Activated CD4-positive, alpha-beta T cell treated with anti-CD3 and anti-CD28 coated beads for 36 hours (primary cell): ENCODE measurements at regions of chr12 and their contacts with region 1.

Region 1: DNA sequence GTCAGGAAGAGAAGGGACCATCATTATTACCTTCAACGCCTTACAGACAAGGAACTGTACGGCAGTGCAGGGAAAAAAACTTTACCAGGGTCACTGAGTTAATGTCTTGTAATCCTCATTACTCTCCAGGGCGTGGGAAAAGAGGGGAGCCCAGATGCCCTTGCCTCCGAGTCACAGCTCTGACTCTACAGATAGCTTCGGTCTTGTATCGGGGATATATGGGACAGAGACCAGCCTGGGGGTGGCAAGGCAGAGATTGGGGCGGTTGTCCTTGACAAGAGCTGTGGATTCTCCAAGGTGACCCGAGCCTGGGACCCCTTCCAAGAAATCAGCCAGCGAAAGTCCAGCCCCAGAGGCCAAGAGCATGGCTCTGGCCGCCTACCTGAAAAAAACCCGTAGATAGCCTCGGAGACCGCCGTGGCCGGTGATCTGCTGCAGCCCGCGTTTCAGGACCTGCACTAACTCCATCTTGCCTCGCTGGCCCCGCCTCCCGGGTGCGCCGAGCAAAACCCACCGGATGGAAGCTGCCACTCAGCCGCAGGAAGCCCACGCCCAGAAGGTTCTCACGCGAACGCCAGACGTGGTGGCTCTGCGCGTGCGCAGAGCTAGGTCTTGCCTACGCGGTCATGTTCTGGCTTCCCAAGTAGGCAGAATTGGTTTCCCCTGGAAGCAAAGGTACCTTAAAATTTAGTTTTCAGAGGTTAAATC is at the start of gene NDUFA12:
- DNase-seq: peak; percentile 98
- ATAC-seq: peak; percentile 99
- H3K4me3 Mint-ChIP-seq: peak within 1 kb of the TSS; percentile 95
- H3K27ac Mint-ChIP-seq: peak within 1 kb of the TSS; percentile 90
- H3K4me1 Mint-ChIP-seq: peaks cover 49% of the 10 kb centered on the region
- H3K27me3 Mint-ChIP-seq: no peaks in the 10 kb centered on the region
- total RNA-seq, gene NDUFA12: 135 to 194 TPM

Region 2: DNA sequence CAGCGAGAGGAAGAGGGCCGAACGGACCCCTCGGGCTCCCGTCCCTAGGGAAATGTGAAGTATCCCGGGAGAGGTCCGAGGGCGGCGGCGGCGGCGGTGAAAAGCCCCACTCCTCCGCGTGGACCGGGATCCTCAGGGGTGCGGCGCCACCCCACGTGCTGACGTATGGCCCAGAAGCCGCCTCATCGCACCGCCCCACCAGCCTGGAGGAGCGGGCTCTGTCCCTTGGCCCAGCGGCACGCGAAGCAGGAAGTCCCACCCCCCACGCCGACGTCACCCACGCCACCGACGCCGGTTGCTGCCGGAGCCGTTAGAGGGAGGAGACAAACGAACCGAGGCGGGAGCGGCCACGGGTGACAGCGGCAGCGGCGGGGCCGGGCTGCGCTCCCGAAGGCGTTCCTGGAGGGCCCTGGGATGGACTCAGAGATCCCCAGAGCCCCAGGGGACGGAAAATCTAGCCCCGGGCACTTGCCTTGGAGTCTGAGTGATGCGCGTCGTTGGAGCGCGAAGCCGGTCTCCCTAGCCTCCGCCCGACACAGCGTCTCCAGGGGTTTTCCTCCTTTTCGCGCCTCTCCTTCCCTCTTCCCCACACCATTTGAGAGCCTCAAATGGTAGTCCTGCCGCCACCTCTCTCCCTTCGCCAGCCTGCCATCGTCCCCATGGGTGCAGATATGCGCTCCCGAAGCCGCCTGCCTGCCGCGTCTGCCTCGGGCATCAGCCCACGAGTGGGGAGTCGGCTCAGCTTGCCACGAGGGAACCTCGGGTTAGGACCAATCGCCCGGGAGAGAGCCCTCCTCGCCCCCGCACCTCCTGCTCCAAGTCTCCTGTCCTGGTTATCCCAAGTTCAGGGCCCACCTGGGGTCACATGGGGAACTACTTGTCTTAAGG is 543.4 kb before region 1 on chr12 and contains the start of gene CEP83:
- CTCF ChIA-PET with region 1: no interaction called
- POLR2A ChIA-PET with region 1: no interaction called
- intact Hi-C with region 1: loop called in 1 of 2 experiments (anchors 1 kb)
- DNase-seq: peak; percentile 98
- ATAC-seq: peak; percentile 99
- H3K4me3 Mint-ChIP-seq: peak within 1 kb of the TSS; percentile 96
- H3K27ac Mint-ChIP-seq: peak within 1 kb of the TSS; percentile 95
- H3K4me1 Mint-ChIP-seq: peaks cover 30% of the 10 kb centered on the region
- H3K27me3 Mint-ChIP-seq: peaks cover 10% of the 10 kb centered on the region
- total RNA-seq, gene CEP83: 21.9 to 22.6 TPM

Region 3: DNA sequence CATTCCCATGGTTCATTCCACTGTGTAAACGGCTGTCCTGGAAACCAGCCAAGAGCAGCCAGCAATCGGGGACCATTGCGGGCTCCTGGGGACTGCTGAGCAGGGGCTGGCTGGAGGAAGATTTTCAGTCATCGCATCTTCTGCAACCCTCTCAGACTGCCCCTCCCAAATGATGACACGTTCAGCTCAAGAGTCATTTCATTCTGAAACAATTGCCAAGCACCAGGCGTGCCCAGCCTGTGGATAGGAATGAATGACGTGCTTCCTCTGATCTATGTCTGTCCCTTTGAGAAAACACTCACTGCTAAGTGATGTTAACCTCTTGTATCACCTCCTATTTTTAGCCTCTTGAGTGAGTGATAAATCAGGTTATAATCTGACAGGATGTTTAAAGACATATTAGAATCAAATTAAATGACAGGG is 61.9 kb before region 1 on chr12:
- CTCF ChIA-PET with region 1: no interaction called
- POLR2A ChIA-PET with region 1: no interaction called
- intact Hi-C with region 1: loop called in 1 of 2 experiments (anchors 5 kb)
- DNase-seq: peak; percentile 79
- ATAC-seq: peak; percentile 96
- H3K4me3 Mint-ChIP-seq: peak overlapping the region; percentile 15
- H3K27ac Mint-ChIP-seq: peak overlapping the region; percentile 87
- H3K4me1 Mint-ChIP-seq: peaks cover 35% of the 10 kb centered on the region
- H3K27me3 Mint-ChIP-seq: peaks cover 7% of the 10 kb centered on the region

Region 4: DNA sequence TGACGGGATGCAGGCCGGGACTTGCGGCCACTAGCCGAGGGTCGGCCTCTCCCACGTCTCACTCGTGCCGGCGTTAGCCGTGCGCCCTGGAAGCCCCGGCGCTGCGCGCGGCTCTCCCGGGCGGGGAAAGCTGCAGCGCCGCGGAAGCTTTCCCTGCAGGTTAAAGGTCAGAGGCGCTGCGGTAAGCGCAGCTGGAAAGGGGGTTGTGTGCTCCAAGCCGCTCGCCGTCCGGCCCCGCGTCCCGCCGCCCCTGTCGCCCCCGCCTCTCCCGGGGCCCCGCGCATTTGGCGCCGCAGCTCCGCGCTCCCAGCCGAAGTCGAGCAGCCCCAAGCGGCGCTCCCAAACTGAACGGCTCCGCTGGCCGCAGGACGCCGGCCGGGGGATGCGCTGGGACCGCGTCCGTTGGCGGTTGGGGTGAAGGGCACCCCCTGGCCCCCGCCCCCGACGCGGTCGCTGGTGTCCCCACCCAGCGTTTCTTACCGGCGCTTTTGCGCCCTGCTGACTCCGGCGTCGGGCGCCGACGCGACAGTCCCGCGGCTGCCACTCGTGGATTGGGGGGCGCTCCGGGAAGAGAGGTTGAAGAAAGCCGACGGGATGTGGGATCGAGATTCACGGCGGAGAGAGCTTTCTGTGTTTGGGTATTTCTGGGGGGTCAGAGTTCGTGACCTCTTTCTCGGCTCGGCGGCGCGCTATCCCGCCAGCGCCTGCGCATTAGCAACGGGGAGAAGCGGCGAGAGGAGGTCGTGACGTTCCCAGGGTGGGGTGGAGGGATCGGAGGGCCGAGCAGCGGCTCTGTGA is 69.7 kb after region 1 on chr12 and contains the start of gene NR2C1:
- CTCF ChIA-PET with region 1: interaction called, 8 read pairs
- POLR2A ChIA-PET with region 1: interaction called, 6 read pairs
- intact Hi-C with region 1: loop called (anchors 1 to 2 kb)
- DNase-seq: peak; percentile 95
- ATAC-seq: peak; percentile 99
- H3K4me3 Mint-ChIP-seq: peak within 1 kb of the TSS; percentile 84
- H3K27ac Mint-ChIP-seq: peak within 1 kb of the TSS; percentile 82
- H3K4me1 Mint-ChIP-seq: peaks cover 12% of the 10 kb centered on the region
- H3K27me3 Mint-ChIP-seq: no peaks in the 10 kb centered on the region
- total RNA-seq, gene NR2C1: 27.6 to 39.3 TPM

Region 5: GRCh38 chr12:95164656-95165055 is 161.3 kb after region 1 on chr12:
- CTCF ChIA-PET with region 1: no interaction called
- POLR2A ChIA-PET with region 1: no interaction called
- intact Hi-C with region 1: no loop called
- DNase-seq: no peak
- ATAC-seq: no peak
- H3K4me3 Mint-ChIP-seq: no peak overlapping the region
- H3K27ac Mint-ChIP-seq: no peak overlapping the region
- H3K4me1 Mint-ChIP-seq: no peaks in the 10 kb centered on the region
- H3K27me3 Mint-ChIP-seq: no peaks in the 10 kb centered on the region

Region 6: GRCh38 chr12:95396849-95397468 is 393.6 kb after region 1 on chr12:
- CTCF ChIA-PET with region 1: no interaction called
- POLR2A ChIA-PET with region 1: no interaction called
- intact Hi-C with region 1: loop called in 1 of 2 experiments (anchors 5 kb)
- DNase-seq: peak; percentile 19
- ATAC-seq: peak; percentile 92
- H3K4me3 Mint-ChIP-seq: no peak overlapping the region
- H3K27ac Mint-ChIP-seq: peak overlapping the region; percentile 48
- H3K4me1 Mint-ChIP-seq: peaks cover 18% of the 10 kb centered on the region
- H3K27me3 Mint-ChIP-seq: peaks cover 11% of the 10 kb centered on the region